Sigmoid colon (tissue), 7 donors: ENCODE measurements at regions of chr6 and their contacts with region 1.

Region 1: DNA sequence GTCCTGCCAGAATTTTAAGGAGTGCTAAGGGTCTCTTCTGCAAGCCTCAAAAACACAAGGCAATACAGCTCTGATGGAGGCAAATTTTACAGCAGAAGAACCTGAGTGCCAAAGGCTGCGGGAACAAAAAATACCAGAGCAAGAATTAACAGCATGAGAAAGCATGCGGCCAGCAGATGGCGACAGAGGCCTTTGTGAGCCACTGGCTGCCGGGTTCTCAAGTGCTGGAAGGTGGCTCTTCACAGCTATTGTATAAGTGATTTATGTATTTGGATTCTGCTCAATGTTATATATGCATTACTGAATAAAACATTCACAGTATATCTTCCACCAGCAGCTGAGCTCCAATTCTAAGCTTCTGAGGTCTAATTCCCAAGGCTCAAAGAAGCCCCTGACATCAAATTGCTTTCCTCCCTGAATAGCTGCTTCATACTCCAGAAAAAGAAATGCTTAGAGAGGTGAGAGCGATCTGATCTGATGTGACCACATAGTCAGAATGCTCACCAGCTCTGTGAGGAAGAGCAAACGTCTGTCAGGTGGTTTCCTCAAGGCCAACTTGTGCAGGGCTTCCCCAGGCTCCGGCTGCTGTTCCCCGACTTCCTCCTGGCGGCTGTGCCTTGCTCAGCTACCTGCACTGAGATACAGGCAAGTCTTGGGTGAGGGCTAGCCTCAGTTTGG is 58.6 kb downstream of the PPP1R3G start:
- DNase-seq: peak; percentile 91
- H3K4me3 ChIP-seq: no peak overlapping the region
- H3K27ac ChIP-seq: no peak overlapping the region
- H3K4me1 ChIP-seq: peaks cover 0 to 8% (median 3%) of the 10 kb centered on the region in 4 donors
- H3K27me3 ChIP-seq: no peaks in the 10 kb centered on the region
- CTCF ChIP-seq: peak; percentile 66 to 88 (median 75)
- EP300 ChIP-seq: no peak
- POLR2A ChIP-seq: no peak

Region 2: DNA sequence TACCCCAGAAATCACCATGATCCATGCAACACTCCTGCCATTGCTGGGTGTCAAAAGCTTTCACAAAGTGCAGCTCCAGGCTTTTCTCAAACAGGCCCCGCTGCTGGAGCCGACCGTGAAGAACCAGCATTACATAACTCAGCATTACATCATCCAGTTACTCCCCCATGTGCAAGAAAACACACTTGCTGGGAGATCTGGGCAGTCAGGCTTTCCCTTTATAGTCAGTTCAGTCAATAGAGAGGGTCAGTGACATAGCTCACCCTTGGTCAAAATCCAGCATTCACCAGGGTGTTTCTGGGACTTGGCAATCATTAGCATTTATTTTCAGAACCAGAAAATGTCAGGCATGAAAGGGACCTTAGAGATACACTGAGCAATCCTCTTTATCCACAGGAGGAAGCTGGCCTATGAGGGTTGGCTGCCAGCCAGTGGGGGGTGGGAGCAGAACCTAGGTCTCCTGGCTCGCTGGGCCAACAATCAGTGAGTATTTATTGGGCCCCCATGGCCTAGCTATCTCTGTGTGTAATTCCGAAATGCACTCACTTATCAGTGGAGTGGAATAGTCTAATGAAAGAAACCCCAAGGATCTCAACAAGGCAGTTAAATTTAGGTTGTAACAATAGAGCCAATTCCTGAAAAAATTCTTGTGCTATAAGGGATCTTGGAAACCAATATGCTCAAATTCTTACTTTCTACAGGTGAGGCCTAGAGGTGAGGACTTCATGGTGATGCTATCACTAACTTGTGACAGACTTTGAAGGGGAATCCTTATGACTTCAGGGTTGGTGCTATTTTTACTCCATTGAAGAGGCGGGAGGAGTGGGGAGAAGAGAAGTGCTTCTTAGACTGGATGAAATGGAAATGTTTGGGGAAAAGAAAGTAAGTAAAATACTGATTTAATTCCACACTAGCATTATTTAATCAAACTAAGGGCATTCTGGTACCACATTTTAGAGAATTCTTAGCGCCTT is 62.4 kb after region 1 on chr6:
- intact Hi-C with region 1: loop called (anchors 5 kb)
- DNase-seq: peak; percentile 84
- H3K4me3 ChIP-seq: no peak overlapping the region
- H3K27ac ChIP-seq: peak overlapping the region; percentile 43 to 87 (median 76)
- H3K4me1 ChIP-seq: peaks cover 0 to 66% (median 62%) of the 10 kb centered on the region in 4 donors
- H3K27me3 ChIP-seq: no peaks in the 10 kb centered on the region
- CTCF ChIP-seq: no peak
- EP300 ChIP-seq: no peak
- POLR2A ChIP-seq: no peak

Region 3: DNA sequence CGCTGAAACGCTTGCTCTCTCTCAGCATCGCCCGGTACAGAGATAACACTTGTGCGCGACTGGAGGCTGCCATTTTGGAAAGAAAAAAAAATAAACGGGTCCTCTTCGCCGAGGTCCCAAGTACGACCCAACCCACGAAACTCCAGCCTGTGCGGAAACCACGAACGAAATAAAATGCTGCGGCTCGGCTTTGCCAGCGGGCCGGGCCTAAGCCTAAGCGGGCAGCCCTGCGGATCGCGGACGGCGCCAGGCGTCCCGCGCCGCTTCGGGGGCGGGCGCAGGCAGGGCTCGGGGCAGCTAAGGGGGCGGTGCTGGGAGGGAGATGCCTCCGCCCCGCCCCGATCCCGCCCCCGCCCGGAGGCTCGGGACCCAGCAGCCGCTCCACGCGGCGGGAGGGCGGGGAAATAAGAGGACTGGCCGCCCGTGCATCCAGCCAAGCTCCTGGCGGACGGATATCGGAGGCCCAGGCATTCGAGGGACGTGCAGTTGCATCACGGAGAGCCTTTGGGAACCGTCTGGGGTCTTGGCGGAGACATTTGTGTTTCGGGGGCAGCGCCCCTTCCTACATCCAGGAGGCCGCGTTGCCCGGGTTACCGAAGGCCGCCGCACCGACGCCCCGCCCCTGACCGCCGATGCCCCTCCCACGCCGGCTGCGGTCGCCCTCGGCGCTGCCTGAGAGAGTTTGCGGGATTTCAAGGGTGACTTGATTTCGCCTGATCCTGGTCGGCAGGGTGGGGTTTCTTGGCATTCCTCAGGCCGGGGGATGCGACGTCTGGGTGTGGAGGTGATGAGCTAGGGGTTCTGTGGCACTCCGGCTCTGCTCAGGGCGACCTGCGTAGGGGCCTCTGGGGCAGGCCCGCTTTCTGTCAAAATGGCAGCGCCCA is 117.1 kb after region 1 on chr6 and contains the starts of genes FARS2 and LYRM4:
- intact Hi-C with region 1: loop called (anchors 5 kb)
- DNase-seq: peak; percentile 92
- H3K4me3 ChIP-seq: peak within 1 kb of the TSS; percentile 73 to 85 (median 78)
- H3K27ac ChIP-seq: peak within 1 kb of the TSS; percentile 92 to 96 (median 93)
- H3K4me1 ChIP-seq: peaks cover 0 to 32% (median 20%) of the 10 kb centered on the region in 4 donors
- H3K27me3 ChIP-seq: no peaks in the 10 kb centered on the region
- CTCF ChIP-seq: peak in 3 of 4 experiments; percentile 33 to 63 (median 34)
- EP300 ChIP-seq: no peak
- POLR2A ChIP-seq: peak in 1 of 2 donors; percentile 13
- total RNA-seq, gene FARS2: 11.7 to 21.0 (median 14.8) TPM
- total RNA-seq, gene LYRM4: 18.3 to 29.3 (median 25.5) TPM

Region 4: DNA sequence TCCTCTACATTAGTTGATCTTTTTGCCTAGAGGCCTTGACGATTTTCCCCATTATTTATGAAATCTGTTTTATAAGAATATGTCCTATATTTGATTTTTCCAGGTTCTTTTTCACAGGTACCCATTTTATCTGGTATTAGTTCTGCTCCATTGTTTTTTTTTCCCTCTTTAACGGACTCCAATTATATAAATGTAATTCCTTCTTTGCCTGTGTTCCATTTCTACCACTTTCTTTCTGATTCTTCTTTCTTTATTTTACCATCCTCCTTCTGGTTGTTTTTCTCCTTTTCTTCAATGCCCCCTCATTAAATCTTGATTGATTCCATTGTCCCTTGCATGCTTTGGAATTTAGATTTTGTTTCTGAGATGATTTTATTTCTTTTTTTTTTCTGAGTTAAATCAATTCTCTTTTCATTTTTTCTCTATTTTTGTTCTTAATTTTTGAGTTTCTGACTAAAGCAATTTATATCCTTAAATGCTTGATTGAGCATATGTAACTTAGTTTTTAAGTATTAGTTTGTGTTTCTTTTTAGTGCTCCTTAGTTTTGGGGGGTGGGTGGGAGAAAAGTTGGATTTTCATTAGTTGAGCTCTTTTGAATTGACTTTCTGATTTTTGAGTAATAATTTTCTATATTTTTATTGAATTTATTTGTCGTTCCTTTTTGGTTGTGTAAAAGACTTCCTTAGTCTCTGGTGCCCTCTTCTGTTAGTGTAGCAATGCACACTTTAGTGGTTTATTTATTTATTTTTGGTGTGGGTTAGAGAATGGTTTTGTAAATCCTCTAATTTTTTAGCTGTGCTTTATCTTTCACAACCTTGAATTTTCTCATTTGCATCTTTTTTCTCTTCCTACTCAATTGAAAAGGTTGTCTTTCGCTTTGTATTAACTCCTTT is 258.3 kb after region 1 on chr6:
- intact Hi-C with region 1: loop called (anchors 5 kb)
- DNase-seq: no peak
- H3K4me3 ChIP-seq: no peak overlapping the region
- H3K27ac ChIP-seq: no peak overlapping the region
- H3K4me1 ChIP-seq: peaks cover 0 to 13% (median 6%) of the 10 kb centered on the region in 4 donors
- H3K27me3 ChIP-seq: no peaks in the 10 kb centered on the region
- CTCF ChIP-seq: peak in 2 of 4 experiments; percentile 25 to 26
- EP300 ChIP-seq: no peak
- POLR2A ChIP-seq: no peak

Region 5: GRCh38 chr6:6547110-6547879 is 1403.5 kb after region 1 on chr6:
- intact Hi-C with region 1: loop called (anchors 1 kb)
- DNase-seq: peak; percentile 93
- H3K4me3 ChIP-seq: peak overlapping the region; percentile 18 to 50 (median 38)
- H3K27ac ChIP-seq: peak overlapping the region in 1 of 4 donors; percentile 21
- H3K4me1 ChIP-seq: peaks cover 0 to 14% (median 13%) of the 10 kb centered on the region in 4 donors
- H3K27me3 ChIP-seq: peaks cover 0 to 46% (median 12%) of the 10 kb centered on the region in 3 donors
- CTCF ChIP-seq: peak; percentile 40 to 90 (median 85)
- EP300 ChIP-seq: no peak
- POLR2A ChIP-seq: no peak